ENCODE measurements at regions of chr19 and their contacts with region 1.

Region 1: DNA sequence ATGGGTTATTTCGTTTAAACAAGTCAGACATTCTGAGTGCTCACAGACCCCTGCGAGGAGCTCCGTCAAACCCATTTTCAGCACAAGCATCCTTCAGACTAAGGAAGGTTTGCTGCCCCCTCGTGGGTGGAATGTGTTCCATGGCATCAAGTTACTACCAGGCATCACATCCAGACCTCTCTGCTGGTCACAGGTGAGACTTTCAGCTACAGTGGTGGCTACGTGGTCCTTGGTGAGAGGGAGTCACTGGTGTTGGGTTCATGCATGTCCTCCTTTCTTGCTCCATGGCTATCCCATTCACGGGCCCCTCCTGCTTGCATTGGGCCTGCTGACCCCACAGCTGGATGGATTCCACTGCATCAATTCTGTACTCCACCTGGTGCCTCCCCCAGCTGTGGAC is 9.1 kb upstream of the LILRB5 start:
- DNase-seq: peak; percentile 26 to 73 (median 67)
- ATAC-seq: no peak
- H3K4me3 ChIP-seq: no peak overlapping the region
- H3K4me3 Mint-ChIP-seq: no peak overlapping the region
- H3K27ac ChIP-seq: no peak overlapping the region
- H3K27ac Mint-ChIP-seq: no peak overlapping the region
- H3K4me1 ChIP-seq: no peaks in the 10 kb centered on the region
- H3K4me1 Mint-ChIP-seq: no peaks in the 10 kb centered on the region
- H3K27me3 ChIP-seq: peaks cover 0 to 3% of the 10 kb centered on the region in 2 experiments
- H3K27me3 Mint-ChIP-seq: peaks cover 22% of the 10 kb centered on the region
- CTCF ChIP-seq: peak; percentile 66

Region 2: GRCh38 chr19:54168174-54168917 is 97.8 kb before region 1 on chr19:
- CTCF ChIA-PET with region 1: interaction called, 5 read pairs
- POLR2A ChIA-PET with region 1: no interaction called
- intact Hi-C with region 1: loop called (anchors 1 kb)
- DNase-seq: peak; percentile 79 to 97 (median 90)
- ATAC-seq: peak; percentile 94
- H3K4me3 ChIP-seq: no peak overlapping the region
- H3K4me3 Mint-ChIP-seq: no peak overlapping the region
- H3K27ac ChIP-seq: no peak overlapping the region
- H3K27ac Mint-ChIP-seq: no peak overlapping the region
- H3K4me1 ChIP-seq: peaks cover 15% of the 10 kb centered on the region
- H3K4me1 Mint-ChIP-seq: peaks cover 10% of the 10 kb centered on the region
- H3K27me3 ChIP-seq: peaks cover 0 to 2% of the 10 kb centered on the region in 2 experiments
- H3K27me3 Mint-ChIP-seq: no peaks in the 10 kb centered on the region
- CTCF ChIP-seq: peak; percentile 79

Region 3: GRCh38 chr19:54179921-54180461 is 86.1 kb before region 1 on chr19:
- CTCF ChIA-PET with region 1: no interaction called
- POLR2A ChIA-PET with region 1: no interaction called
- intact Hi-C with region 1: no loop called
- DNase-seq: no peak
- ATAC-seq: no peak
- H3K4me3 ChIP-seq: no peak overlapping the region
- H3K4me3 Mint-ChIP-seq: no peak overlapping the region
- H3K27ac ChIP-seq: no peak overlapping the region
- H3K27ac Mint-ChIP-seq: no peak overlapping the region
- H3K4me1 ChIP-seq: no peaks in the 10 kb centered on the region
- H3K4me1 Mint-ChIP-seq: no peaks in the 10 kb centered on the region
- H3K27me3 ChIP-seq: no peaks in the 10 kb centered on the region
- H3K27me3 Mint-ChIP-seq: no peaks in the 10 kb centered on the region
- CTCF ChIP-seq: no peak

Region 4: GRCh38 chr19:54339646-54340358 is 73.7 kb after region 1 on chr19:
- CTCF ChIA-PET with region 1: no interaction called
- POLR2A ChIA-PET with region 1: no interaction called
- intact Hi-C with region 1: no loop called
- DNase-seq: no peak
- ATAC-seq: no peak
- H3K4me3 ChIP-seq: no peak overlapping the region
- H3K4me3 Mint-ChIP-seq: no peak overlapping the region
- H3K27ac ChIP-seq: no peak overlapping the region
- H3K27ac Mint-ChIP-seq: no peak overlapping the region
- H3K4me1 ChIP-seq: no peaks in the 10 kb centered on the region
- H3K4me1 Mint-ChIP-seq: no peaks in the 10 kb centered on the region
- H3K27me3 ChIP-seq: no peaks in the 10 kb centered on the region
- H3K27me3 Mint-ChIP-seq: peaks cover 4% of the 10 kb centered on the region
- CTCF ChIP-seq: no peak

Measured in CD8-positive, alpha-beta T cell (primary cell).